Activated CD8-positive, alpha-beta T cell treated with anti-CD3 and anti-CD28 coated beads for 36 hours (primary cell): ENCODE measurements at regions of chr5 and their contacts with region 1.

Region 1: GRCh38 chr5:39177631-39177964 is 41.8 kb downstream of the FYB1 start:
- DNase-seq: no peak
- ATAC-seq: peak; percentile 16
- H3K4me3 Mint-ChIP-seq: peak overlapping the region; percentile 55
- H3K27ac Mint-ChIP-seq: peak overlapping the region; percentile 89
- H3K4me1 Mint-ChIP-seq: peaks cover 95% of the 10 kb centered on the region
- H3K27me3 Mint-ChIP-seq: no peaks in the 10 kb centered on the region
- CTCF ChIP-seq: no peak

Region 2: GRCh38 chr5:39106322-39106721 is 71.3 kb before region 1 on chr5:
- CTCF ChIA-PET with region 1: no interaction called
- POLR2A ChIA-PET with region 1: no interaction called
- intact Hi-C with region 1: no loop called
- DNase-seq: no peak
- ATAC-seq: no peak
- H3K4me3 Mint-ChIP-seq: no peak overlapping the region
- H3K27ac Mint-ChIP-seq: peak overlapping the region; percentile 9
- H3K4me1 Mint-ChIP-seq: peaks cover 7% of the 10 kb centered on the region
- H3K27me3 Mint-ChIP-seq: no peaks in the 10 kb centered on the region
- CTCF ChIP-seq: peak; percentile 6

Region 3: DNA sequence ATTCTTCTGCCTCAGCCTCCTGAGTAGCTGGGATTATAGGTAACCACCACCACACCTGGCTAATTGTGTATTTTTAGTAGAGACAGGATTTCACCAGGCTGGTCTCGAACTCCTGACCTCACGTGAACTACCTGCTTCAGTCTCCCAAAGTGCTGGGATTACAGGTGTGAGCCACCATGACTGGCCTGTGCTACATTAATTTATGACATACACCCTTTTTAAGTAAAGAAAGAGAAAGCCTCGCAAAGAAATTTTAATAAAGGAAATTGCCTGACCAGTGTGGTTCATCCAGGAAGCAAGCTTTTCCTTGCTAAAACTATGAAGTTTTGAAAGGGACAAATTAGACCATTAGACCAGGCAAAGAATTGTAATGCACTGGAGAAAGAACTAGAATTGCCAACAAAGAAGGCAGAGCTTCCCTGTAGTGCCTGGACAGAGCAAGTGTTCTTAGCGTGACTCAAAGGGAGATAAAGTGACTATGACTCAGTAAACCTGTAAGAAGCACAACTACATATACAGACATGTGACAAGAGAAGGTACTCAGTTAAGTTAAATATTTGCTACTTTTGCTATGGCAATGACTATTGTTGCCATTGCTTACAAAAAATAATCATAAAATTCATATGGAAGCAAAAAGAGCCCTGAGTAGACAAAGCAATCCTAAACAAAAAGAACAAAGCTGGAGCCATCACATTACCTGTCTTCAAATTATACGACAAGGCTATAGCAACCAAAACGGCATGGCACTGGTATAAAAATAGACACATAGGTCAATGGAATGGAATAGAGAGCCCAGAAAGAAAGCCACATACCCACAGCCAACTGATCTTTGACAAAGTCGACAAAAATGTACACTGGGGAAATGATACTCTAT is 12.8 kb before region 1 on chr5:
- CTCF ChIA-PET with region 1: interaction called, 16 read pairs
- POLR2A ChIA-PET with region 1: interaction called, 60 read pairs
- intact Hi-C with region 1: loop called (anchors 1 kb)
- DNase-seq: no peak
- ATAC-seq: peak; percentile 89
- H3K4me3 Mint-ChIP-seq: peak overlapping the region; percentile 67
- H3K27ac Mint-ChIP-seq: peak overlapping the region; percentile 96
- H3K4me1 Mint-ChIP-seq: peaks cover 89% of the 10 kb centered on the region
- H3K27me3 Mint-ChIP-seq: no peaks in the 10 kb centered on the region
- CTCF ChIP-seq: no peak

Region 4: GRCh38 chr5:39187831-39188731 is 10.5 kb after region 1 on chr5:
- CTCF ChIA-PET with region 1: interaction called, 11 read pairs
- POLR2A ChIA-PET with region 1: interaction called, 202 read pairs
- intact Hi-C with region 1: loop called (anchors 1 kb)
- DNase-seq: peak; percentile 51
- ATAC-seq: peak; percentile 44
- H3K4me3 Mint-ChIP-seq: peak overlapping the region; percentile 72
- H3K27ac Mint-ChIP-seq: peak overlapping the region; percentile 96
- H3K4me1 Mint-ChIP-seq: peaks cover 84% of the 10 kb centered on the region
- H3K27me3 Mint-ChIP-seq: no peaks in the 10 kb centered on the region
- CTCF ChIP-seq: no peak

Region 5: GRCh38 chr5:39194466-39195136 is 17.0 kb after region 1 on chr5:
- CTCF ChIA-PET with region 1: interaction called, 13 read pairs
- POLR2A ChIA-PET with region 1: interaction called, 202 read pairs
- intact Hi-C with region 1: loop called (anchors 2 kb)
- DNase-seq: no peak
- ATAC-seq: peak; percentile 19
- H3K4me3 Mint-ChIP-seq: peak overlapping the region; percentile 66
- H3K27ac Mint-ChIP-seq: peak overlapping the region; percentile 89
- H3K4me1 Mint-ChIP-seq: peaks cover 69% of the 10 kb centered on the region
- H3K27me3 Mint-ChIP-seq: no peaks in the 10 kb centered on the region
- CTCF ChIP-seq: no peak

Region 6: DNA sequence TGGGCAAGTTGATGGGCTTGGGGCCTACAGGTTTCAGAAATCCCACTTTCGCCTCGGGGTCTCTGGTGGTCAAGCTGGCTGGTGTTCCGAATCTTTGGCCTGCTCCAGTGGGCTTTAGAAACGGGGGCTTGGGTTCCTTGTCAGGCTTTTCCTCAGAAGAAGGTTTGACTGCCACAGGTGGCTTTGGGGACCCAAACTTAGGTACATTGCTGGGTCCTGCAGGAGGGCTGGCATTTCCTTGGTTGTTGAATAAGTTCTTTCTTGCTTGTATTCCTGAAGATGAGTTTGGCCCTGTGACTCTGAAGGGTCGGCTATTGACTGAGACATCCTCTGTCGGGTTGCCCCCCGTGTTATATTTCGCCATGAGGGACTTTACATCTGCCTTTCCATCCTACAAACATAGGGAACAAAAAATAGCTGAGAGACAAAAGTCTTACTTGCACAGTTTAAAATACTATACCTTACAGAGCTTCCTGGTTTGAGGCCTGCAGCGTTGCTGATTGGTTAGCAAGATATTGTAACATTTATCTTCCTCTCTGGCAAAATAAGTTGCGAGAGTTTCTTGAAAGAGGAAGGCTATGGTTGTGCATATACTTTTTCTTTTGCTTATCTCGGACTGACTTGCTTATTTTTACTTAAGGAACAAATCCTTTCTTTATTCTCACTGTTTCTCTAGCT is 25.1 kb after region 1 on chr5:
- CTCF ChIA-PET with region 1: interaction called, 11 read pairs
- POLR2A ChIA-PET with region 1: interaction called, 202 read pairs
- intact Hi-C with region 1: no loop called
- DNase-seq: peak; percentile 58
- ATAC-seq: peak; percentile 23
- H3K4me3 Mint-ChIP-seq: peak overlapping the region; percentile 92
- H3K27ac Mint-ChIP-seq: peak overlapping the region; percentile 97
- H3K4me1 Mint-ChIP-seq: peaks cover 36% of the 10 kb centered on the region
- H3K27me3 Mint-ChIP-seq: no peaks in the 10 kb centered on the region
- CTCF ChIP-seq: no peak

Region 7: GRCh38 chr5:39209924-39210323 is 32.3 kb after region 1 on chr5:
- CTCF ChIA-PET with region 1: interaction called, 5 read pairs
- POLR2A ChIA-PET with region 1: interaction called, 9 read pairs
- intact Hi-C with region 1: loop called (anchors 5 kb)
- DNase-seq: peak; percentile 91
- ATAC-seq: peak; percentile 74
- H3K4me3 Mint-ChIP-seq: peak overlapping the region; percentile 71
- H3K27ac Mint-ChIP-seq: peak overlapping the region; percentile 94
- H3K4me1 Mint-ChIP-seq: peaks cover 87% of the 10 kb centered on the region
- H3K27me3 Mint-ChIP-seq: no peaks in the 10 kb centered on the region
- CTCF ChIP-seq: no peak